ENCODE measurements at regions of chr4 and their contacts with region 1.

Region 1: DNA sequence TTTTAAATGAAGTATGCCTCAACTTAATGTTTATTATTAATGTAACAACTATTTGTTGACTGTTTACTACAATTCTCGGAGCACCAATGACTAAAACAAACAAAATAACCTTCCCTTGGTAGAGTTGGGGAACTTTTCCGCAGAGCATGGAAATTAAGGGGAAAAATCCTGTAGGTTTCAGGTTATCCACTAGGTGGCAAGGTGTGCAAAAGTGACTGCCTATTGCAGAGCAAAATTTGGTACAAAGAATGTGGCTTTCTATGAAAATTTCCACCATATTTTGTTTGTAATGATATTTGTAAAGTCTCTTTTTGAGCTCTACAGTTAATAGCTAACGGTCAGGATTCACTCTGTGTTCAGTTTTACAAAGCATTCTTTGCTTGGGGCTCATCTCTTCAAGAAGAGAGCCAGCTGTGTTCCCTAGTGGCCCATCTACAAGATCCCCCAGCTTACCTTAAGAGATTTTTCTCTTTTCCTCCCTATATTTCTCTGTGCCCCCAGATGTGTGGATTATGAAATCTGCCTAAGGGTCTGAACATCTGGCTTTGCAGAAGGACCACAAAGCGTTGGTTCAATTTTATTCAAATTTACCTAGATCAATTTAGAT is 61.1 kb downstream of the FBXO8 start:
- DNase-seq: no peak
- H3K4me3 Mint-ChIP-seq: no peak overlapping the region
- H3K27ac Mint-ChIP-seq: no peak overlapping the region
- H3K4me1 Mint-ChIP-seq: peaks cover 6% of the 10 kb centered on the region
- H3K27me3 Mint-ChIP-seq: peaks cover 41% of the 10 kb centered on the region

Region 2: GRCh38 chr4:174318829-174319764 is 96.7 kb after region 1 on chr4:
- CTCF ChIA-PET with region 1: interaction called, 14 read pairs
- POLR2A ChIA-PET with region 1: no interaction called
- intact Hi-C with region 1: loop called (anchors 1 kb)
- DNase-seq: no peak
- H3K4me3 Mint-ChIP-seq: no peak overlapping the region
- H3K27ac Mint-ChIP-seq: no peak overlapping the region
- H3K4me1 Mint-ChIP-seq: no peaks in the 10 kb centered on the region
- H3K27me3 Mint-ChIP-seq: no peaks in the 10 kb centered on the region

Region 3: GRCh38 chr4:174553828-174554227 is 331.5 kb after region 1 on chr4:
- CTCF ChIA-PET with region 1: no interaction called
- POLR2A ChIA-PET with region 1: no interaction called
- intact Hi-C with region 1: no loop called
- DNase-seq: no peak
- H3K4me3 Mint-ChIP-seq: no peak overlapping the region
- H3K27ac Mint-ChIP-seq: no peak overlapping the region
- H3K4me1 Mint-ChIP-seq: no peaks in the 10 kb centered on the region
- H3K27me3 Mint-ChIP-seq: no peaks in the 10 kb centered on the region

Region 4: DNA sequence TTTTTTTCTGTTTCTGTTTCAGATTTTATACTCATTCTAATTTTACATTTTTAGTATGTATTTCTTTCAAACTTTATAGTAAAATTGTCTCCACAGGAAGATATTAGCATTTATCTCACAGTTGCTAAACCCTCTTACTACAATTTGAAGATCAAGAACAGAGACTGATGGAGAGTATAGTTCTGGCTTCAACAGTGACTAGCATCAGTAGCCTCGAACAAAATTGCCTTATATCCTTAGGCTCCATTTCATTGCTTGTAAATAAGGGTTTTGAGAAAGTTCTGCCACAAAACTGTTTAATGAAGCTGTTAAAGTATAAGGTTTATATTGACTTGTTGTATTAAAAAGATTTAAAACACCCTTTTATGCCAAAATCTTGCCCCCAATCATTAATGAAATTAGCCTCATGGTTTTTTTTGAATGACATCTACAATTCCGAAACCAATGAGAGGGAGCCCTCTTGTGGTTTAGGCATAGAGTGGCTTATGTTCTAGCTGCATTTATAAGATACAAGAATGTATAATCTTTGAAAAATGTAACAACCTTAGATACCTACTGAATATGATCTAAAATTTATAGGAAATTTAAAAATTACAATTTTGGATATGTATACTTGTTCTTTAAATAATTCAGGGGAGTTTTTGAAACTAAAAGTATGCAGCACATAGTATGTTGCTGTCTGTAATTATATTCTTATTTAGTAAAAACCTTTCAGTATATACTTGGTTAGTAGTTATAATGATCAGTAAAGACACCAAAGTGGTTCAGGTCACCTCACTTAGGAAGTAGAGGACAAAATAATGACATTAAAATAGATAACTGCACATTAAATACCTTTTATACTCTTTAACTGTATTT is 409.8 kb after region 1 on chr4:
- CTCF ChIA-PET with region 1: no interaction called
- POLR2A ChIA-PET with region 1: no interaction called
- intact Hi-C with region 1: loop called (anchors 5 kb)
- DNase-seq: no peak
- H3K4me3 Mint-ChIP-seq: no peak overlapping the region
- H3K27ac Mint-ChIP-seq: no peak overlapping the region
- H3K4me1 Mint-ChIP-seq: no peaks in the 10 kb centered on the region
- H3K27me3 Mint-ChIP-seq: no peaks in the 10 kb centered on the region

Measured in activated CD4-positive, alpha-beta memory T cell treated with anti-CD3 and anti-CD28 coated beads for 36 hours (primary cell).